Activated naive CD4-positive, alpha-beta T cell treated with anti-CD3 and anti-CD28 coated beads for 36 hours (primary cell): ENCODE measurements at regions of chr2 and their contacts with region 1.

Region 1: GRCh38 chr2:99489761-99490622 is at the start of gene REV1:
- DNase-seq: peak; percentile 94
- H3K4me3 Mint-ChIP-seq: peak within 1 kb of the TSS; percentile 87
- H3K27ac Mint-ChIP-seq: peak within 1 kb of the TSS; percentile 92
- H3K4me1 Mint-ChIP-seq: peaks cover 37% of the 10 kb centered on the region
- H3K27me3 Mint-ChIP-seq: no peaks in the 10 kb centered on the region
- total RNA-seq, gene REV1: 29.6 to 32.3 TPM

Region 2: GRCh38 chr2:98649135-98649991 is 840.6 kb before region 1 on chr2:
- CTCF ChIA-PET with region 1: no interaction called
- intact Hi-C with region 1: loop called (anchors 2 kb)
- DNase-seq: peak; percentile 92
- H3K4me3 Mint-ChIP-seq: no peak overlapping the region
- H3K27ac Mint-ChIP-seq: peak overlapping the region; percentile 83
- H3K4me1 Mint-ChIP-seq: peaks cover 56% of the 10 kb centered on the region
- H3K27me3 Mint-ChIP-seq: no peaks in the 10 kb centered on the region

Region 3: GRCh38 chr2:99066075-99066958 is 423.7 kb before region 1 on chr2:
- CTCF ChIA-PET with region 1: no interaction called
- intact Hi-C with region 1: loop called (anchors 1 kb)
- DNase-seq: peak; percentile 65
- H3K4me3 Mint-ChIP-seq: no peak overlapping the region
- H3K27ac Mint-ChIP-seq: no peak overlapping the region
- H3K4me1 Mint-ChIP-seq: peaks cover 4% of the 10 kb centered on the region
- H3K27me3 Mint-ChIP-seq: no peaks in the 10 kb centered on the region

Region 4: GRCh38 chr2:99141110-99142108 is 348.6 kb before region 1 on chr2 and contains the start of gene C2orf15:
- CTCF ChIA-PET with region 1: interaction called, 3 read pairs
- intact Hi-C with region 1: loop called (anchors 1 kb)
- DNase-seq: peak; percentile 96
- H3K4me3 Mint-ChIP-seq: peak within 1 kb of the TSS; percentile 93
- H3K27ac Mint-ChIP-seq: peak within 1 kb of the TSS; percentile 86
- H3K4me1 Mint-ChIP-seq: peaks cover 17% of the 10 kb centered on the region
- H3K27me3 Mint-ChIP-seq: no peaks in the 10 kb centered on the region
- total RNA-seq, gene C2orf15: 1.4 to 1.6 TPM

Region 5: DNA sequence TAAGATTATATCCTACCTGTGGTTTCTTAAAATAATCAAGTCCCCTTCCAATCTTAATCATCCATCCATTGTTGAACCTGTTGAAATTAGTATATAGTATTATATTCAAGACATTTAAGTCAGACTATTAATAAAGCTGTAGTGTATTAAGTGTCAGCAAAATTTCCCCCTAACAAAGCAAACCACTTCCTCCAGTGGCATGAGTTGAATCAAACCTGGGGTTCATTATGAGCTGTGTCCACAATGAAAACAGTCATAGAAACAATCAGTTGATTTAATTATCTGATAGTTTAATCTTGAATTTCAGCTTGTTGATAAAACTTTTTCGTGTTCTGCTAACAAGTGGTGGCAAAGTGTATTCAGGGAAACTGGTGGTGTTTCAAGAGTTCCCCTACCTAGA is 320.5 kb before region 1 on chr2:
- CTCF ChIA-PET with region 1: no interaction called
- intact Hi-C with region 1: no loop called
- DNase-seq: no peak
- H3K4me3 Mint-ChIP-seq: no peak overlapping the region
- H3K27ac Mint-ChIP-seq: peak overlapping the region; percentile 16
- H3K4me1 Mint-ChIP-seq: peaks cover 28% of the 10 kb centered on the region
- H3K27me3 Mint-ChIP-seq: no peaks in the 10 kb centered on the region

Region 6: GRCh38 chr2:99180755-99181623 is 309.0 kb before region 1 on chr2 and contains the starts of genes MITD1 and MRPL30:
- CTCF ChIA-PET with region 1: no interaction called
- intact Hi-C with region 1: loop called (anchors 1 kb)
- DNase-seq: peak; percentile 94
- H3K4me3 Mint-ChIP-seq: peak within 1 kb of the TSS; percentile 95
- H3K27ac Mint-ChIP-seq: peak within 1 kb of the TSS; percentile 92
- H3K4me1 Mint-ChIP-seq: peaks cover 63% of the 10 kb centered on the region
- H3K27me3 Mint-ChIP-seq: no peaks in the 10 kb centered on the region
- total RNA-seq, gene MITD1: 61.4 to 64.1 TPM
- total RNA-seq, gene MRPL30: 40.2 to 43.3 TPM

Region 7: GRCh38 chr2:99602475-99602874 is 112.5 kb after region 1 on chr2:
- CTCF ChIA-PET with region 1: no interaction called
- intact Hi-C with region 1: no loop called
- DNase-seq: no peak
- H3K4me3 Mint-ChIP-seq: no peak overlapping the region
- H3K27ac Mint-ChIP-seq: no peak overlapping the region
- H3K4me1 Mint-ChIP-seq: no peaks in the 10 kb centered on the region
- H3K27me3 Mint-ChIP-seq: no peaks in the 10 kb centered on the region